ENCODE measurements at regions of chr7 and their contacts with region 1.

Region 1: DNA sequence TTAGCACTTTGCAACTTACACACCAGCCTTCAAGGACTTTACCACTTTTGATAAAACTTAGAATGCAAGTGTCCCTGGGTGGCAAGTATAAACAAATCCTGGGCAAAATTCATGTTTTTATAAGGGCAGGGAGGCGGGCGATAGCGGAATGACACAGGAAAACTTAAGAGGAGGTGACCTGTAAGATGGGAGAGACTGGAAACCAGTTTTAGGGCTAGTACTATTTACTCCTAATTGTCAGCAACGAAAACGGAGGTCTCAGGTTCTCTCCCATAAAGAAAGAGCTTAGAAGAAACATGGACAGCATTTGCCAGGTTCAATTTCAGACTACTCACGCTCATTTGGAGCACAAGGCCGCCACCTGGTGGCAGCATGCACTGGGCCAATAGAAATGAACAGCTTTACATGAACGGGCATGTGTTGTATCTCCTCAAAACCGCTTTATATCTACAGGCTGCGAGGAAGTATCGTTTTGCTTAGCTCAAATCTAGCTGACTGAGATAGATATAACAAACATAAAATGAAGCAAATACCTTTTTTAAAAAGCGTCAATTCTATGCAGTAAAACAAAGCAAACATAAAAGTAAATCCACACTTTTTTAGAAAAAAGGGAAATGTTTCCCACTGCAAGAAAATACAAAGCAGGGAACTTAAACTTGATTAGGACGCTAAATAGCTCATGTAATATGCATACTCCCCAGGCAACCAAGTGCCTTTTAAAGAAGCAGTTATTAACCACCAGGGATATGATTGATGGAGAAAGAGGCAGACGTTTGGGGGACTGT is 37.6 kb upstream of the SVOPL start:
- DNase-seq: peak; percentile 70 to 86 (median 80)
- ATAC-seq: peak; percentile 92
- H3K4me3 ChIP-seq: no peak overlapping the region
- H3K4me3 Mint-ChIP-seq: no peak overlapping the region
- H3K27ac ChIP-seq: no peak overlapping the region
- H3K27ac Mint-ChIP-seq: peak overlapping the region in 7 of 9 donors; percentile 1 to 83 (median 65)
- H3K4me1 ChIP-seq: no peaks in the 10 kb centered on the region
- H3K4me1 Mint-ChIP-seq: peaks cover 0 to 7% (median 4%) of the 10 kb centered on the region in 7 donors
- H3K27me3 ChIP-seq: no peaks in the 10 kb centered on the region
- H3K27me3 Mint-ChIP-seq: no peaks in the 10 kb centered on the region

Region 2: DNA sequence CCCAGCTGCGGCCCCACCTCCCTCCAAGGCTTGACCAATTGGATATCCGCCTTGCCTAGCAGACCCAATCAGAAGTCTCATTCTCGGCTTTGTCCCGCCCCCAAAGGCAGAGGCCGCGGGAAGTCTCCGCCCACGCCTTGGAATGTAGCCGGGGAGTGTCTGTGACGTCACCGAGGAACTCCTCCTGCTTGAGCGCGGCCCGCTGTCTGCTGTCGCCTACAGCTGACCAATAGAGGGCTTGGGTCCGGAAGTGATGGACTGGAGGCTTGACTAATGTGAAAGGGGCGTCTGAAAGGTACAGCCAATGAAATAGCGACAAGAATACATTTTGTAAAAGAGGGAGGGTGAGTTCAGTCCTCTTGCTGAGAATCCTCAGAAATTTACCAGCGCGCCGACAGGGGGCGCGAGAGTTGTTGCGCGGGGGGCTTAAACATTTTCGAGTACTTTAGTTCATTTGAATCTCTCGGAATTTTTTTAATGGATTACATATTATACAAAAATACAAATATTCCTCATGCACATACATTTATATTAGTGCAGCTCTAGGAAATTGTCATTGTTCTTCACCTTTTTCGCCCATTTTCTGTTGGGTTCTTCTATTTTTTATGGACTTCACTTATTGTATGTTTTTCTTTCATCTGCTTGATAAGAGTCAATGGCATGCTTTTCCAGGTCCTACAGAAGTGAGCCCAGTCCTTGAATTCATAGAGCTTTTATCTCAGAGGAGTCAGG is 736.5 kb before region 1 on chr7:
- CTCF ChIA-PET with region 1: interaction called, 3 read pairs
- POLR2A ChIA-PET with region 1: no interaction called
- intact Hi-C with region 1: loop called in 1 of 2 experiments (anchors 1 kb)
- DNase-seq: peak; percentile 95 to 98 (median 97)
- ATAC-seq: peak; percentile 95
- H3K4me3 ChIP-seq: peak overlapping the region; percentile 99
- H3K4me3 Mint-ChIP-seq: peak overlapping the region; percentile 89 to 96 (median 94)
- H3K27ac ChIP-seq: peak overlapping the region; percentile 79
- H3K27ac Mint-ChIP-seq: peak overlapping the region; percentile 67 to 95 (median 89)
- H3K4me1 ChIP-seq: peaks cover 6 to 14% of the 10 kb centered on the region in 2 donors
- H3K4me1 Mint-ChIP-seq: peaks cover 9 to 54% (median 45%) of the 10 kb centered on the region in 7 donors
- H3K27me3 ChIP-seq: no peaks in the 10 kb centered on the region
- H3K27me3 Mint-ChIP-seq: no peaks in the 10 kb centered on the region

Region 3: GRCh38 chr7:138097064-138097741 is 641.5 kb before region 1 on chr7:
- CTCF ChIA-PET with region 1: no interaction called
- POLR2A ChIA-PET with region 1: no interaction called
- intact Hi-C with region 1: loop called in 1 of 2 experiments (anchors 2 kb)
- DNase-seq: peak in 1 of 9 donors; percentile 7
- ATAC-seq: no peak
- H3K4me3 ChIP-seq: no peak overlapping the region
- H3K4me3 Mint-ChIP-seq: no peak overlapping the region
- H3K27ac ChIP-seq: no peak overlapping the region
- H3K27ac Mint-ChIP-seq: no peak overlapping the region
- H3K4me1 ChIP-seq: no peaks in the 10 kb centered on the region
- H3K4me1 Mint-ChIP-seq: no peaks in the 10 kb centered on the region
- H3K27me3 ChIP-seq: no peaks in the 10 kb centered on the region
- H3K27me3 Mint-ChIP-seq: peaks cover 2 to 17% (median 9%) of the 10 kb centered on the region in 5 donors

Region 4: DNA sequence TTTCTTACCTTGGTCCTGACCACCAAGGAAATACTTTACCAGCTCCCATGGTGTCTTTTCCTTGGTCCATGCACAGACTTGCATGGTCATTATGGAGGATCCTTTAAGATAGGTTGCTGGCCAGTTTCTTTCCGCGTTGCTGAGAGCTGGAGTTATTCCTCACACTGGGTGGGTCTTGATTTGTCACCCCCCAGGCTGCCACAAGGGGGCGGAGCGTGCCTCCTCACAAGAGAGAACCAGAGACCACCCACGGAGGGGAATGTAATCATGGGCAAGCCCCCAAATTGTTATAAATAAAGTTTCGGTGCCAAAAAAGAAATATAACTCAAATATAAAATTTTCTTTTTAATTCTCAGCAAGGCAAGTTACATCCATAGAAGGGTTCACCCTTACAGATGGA is 289.2 kb before region 1 on chr7:
- CTCF ChIA-PET with region 1: interaction called, 7 read pairs
- POLR2A ChIA-PET with region 1: no interaction called
- intact Hi-C with region 1: loop called (anchors 1 kb)
- DNase-seq: peak in 7 of 9 donors; percentile 8 to 37 (median 18)
- ATAC-seq: no peak
- H3K4me3 ChIP-seq: no peak overlapping the region
- H3K4me3 Mint-ChIP-seq: no peak overlapping the region
- H3K27ac ChIP-seq: no peak overlapping the region
- H3K27ac Mint-ChIP-seq: no peak overlapping the region
- H3K4me1 ChIP-seq: no peaks in the 10 kb centered on the region
- H3K4me1 Mint-ChIP-seq: no peaks in the 10 kb centered on the region
- H3K27me3 ChIP-seq: no peaks in the 10 kb centered on the region
- H3K27me3 Mint-ChIP-seq: peaks cover 0 to 3% (median 0%) of the 10 kb centered on the region in 5 donors

Region 5: GRCh38 chr7:138865843-138866242 is 127.1 kb after region 1 on chr7:
- CTCF ChIA-PET with region 1: interaction called, 3 read pairs
- POLR2A ChIA-PET with region 1: no interaction called
- intact Hi-C with region 1: loop called (anchors 1 kb)
- DNase-seq: peak in 8 of 9 donors; percentile 21 to 62 (median 49)
- ATAC-seq: peak; percentile 84
- H3K4me3 ChIP-seq: no peak overlapping the region
- H3K4me3 Mint-ChIP-seq: no peak overlapping the region
- H3K27ac ChIP-seq: no peak overlapping the region
- H3K27ac Mint-ChIP-seq: peak overlapping the region in 7 of 9 donors; percentile 0 to 69 (median 40)
- H3K4me1 ChIP-seq: no peaks in the 10 kb centered on the region
- H3K4me1 Mint-ChIP-seq: peaks cover 0 to 18% (median 7%) of the 10 kb centered on the region in 7 donors
- H3K27me3 ChIP-seq: no peaks in the 10 kb centered on the region
- H3K27me3 Mint-ChIP-seq: peaks cover 0 to 4% (median 2%) of the 10 kb centered on the region in 5 donors

Region 6: DNA sequence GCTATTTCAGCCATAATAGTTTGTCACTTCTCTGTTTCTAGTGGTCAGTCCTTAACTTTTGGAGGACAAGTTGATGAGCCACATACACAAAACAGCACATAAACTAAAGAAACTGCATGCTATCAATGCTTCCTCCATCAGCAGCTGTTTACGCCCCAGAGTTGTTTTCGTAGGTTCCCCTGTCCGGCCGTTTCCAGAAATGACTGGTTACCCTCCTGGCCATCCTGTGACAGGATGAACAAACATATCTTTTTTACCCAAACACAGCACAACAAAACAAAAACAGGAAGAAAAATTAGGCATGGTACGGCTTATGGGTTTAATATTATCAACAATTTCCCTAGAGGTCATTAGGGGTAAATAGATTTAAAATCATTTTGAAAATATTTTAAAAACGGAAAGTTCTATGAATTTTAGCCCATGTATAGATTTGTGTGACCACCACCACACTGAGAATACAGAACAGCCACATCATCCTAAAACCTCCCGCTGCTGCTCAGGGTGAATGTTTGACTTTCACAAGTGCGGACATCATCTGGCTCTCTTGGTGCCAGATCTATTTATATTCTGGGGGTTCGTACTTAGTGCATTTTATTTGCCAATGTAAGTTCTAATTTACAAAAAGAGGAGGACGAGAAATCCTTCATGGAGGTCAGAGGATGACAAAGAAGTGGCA is 964.2 kb after region 1 on chr7:
- CTCF ChIA-PET with region 1: no interaction called
- POLR2A ChIA-PET with region 1: no interaction called
- intact Hi-C with region 1: no loop called
- DNase-seq: no peak
- ATAC-seq: peak; percentile 29
- H3K4me3 ChIP-seq: no peak overlapping the region
- H3K4me3 Mint-ChIP-seq: no peak overlapping the region
- H3K27ac ChIP-seq: no peak overlapping the region
- H3K27ac Mint-ChIP-seq: no peak overlapping the region
- H3K4me1 ChIP-seq: no peaks in the 10 kb centered on the region
- H3K4me1 Mint-ChIP-seq: peaks cover 13 to 42% (median 25%) of the 10 kb centered on the region in 7 donors
- H3K27me3 ChIP-seq: no peaks in the 10 kb centered on the region
- H3K27me3 Mint-ChIP-seq: no peaks in the 10 kb centered on the region